Naive thymus-derived CD4-positive, alpha-beta T cell (primary cell): ENCODE measurements at regions of chr13 and their contacts with region 1.

Region 1: GRCh38 chr13:100356889-100357288 is 231.7 kb downstream of the GGACT start:
- DNase-seq: no peak
- ATAC-seq: no peak
- H3K4me3 ChIP-seq: no peak overlapping the region
- H3K4me3 Mint-ChIP-seq: no peak overlapping the region
- H3K27ac ChIP-seq: no peak overlapping the region
- H3K27ac Mint-ChIP-seq: no peak overlapping the region
- H3K4me1 ChIP-seq: no peaks in the 10 kb centered on the region
- H3K4me1 Mint-ChIP-seq: no peaks in the 10 kb centered on the region
- H3K27me3 ChIP-seq: no peaks in the 10 kb centered on the region
- H3K27me3 Mint-ChIP-seq: peaks cover 0 to 2% (median 0%) of the 10 kb centered on the region in 5 donors

Region 2: DNA sequence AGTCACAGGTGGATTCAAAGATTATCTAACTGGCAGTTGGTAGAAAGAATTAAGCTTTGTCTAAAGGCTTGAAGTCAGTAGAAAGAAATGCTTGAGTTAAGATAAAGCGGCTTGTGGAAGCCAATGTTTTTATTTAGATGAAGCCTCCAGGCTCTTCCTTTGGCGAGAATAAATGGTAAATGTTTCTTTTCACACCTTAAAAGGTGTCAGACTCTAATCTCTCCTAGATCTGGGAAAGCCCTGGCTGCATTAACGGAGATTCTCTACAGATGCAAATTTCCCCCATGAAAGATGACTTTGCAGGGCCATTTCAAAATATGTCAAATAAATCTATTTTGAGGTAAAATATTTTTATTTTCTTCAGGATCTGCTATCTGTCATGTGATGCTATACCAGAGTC is 305.8 kb before region 1 on chr13:
- CTCF ChIA-PET with region 1: interaction called, 11 read pairs
- POLR2A ChIA-PET with region 1: no interaction called
- intact Hi-C with region 1: no loop called
- DNase-seq: no peak
- ATAC-seq: no peak
- H3K4me3 ChIP-seq: no peak overlapping the region
- H3K4me3 Mint-ChIP-seq: no peak overlapping the region
- H3K27ac ChIP-seq: no peak overlapping the region
- H3K27ac Mint-ChIP-seq: no peak overlapping the region
- H3K4me1 ChIP-seq: no peaks in the 10 kb centered on the region
- H3K4me1 Mint-ChIP-seq: no peaks in the 10 kb centered on the region
- H3K27me3 ChIP-seq: no peaks in the 10 kb centered on the region
- H3K27me3 Mint-ChIP-seq: peaks cover 3 to 9% (median 5%) of the 10 kb centered on the region in 5 donors